ENCODE measurements at regions of chr6 and their contacts with region 1.

Region 1: GRCh38 chr6:52647199-52647598 is 23.7 kb upstream of the TMEM14A start:
- DNase-seq: no peak
- H3K4me3 ChIP-seq: no peak overlapping the region
- H3K27ac ChIP-seq: no peak overlapping the region
- H3K4me1 ChIP-seq: no peaks in the 10 kb centered on the region
- H3K27me3 ChIP-seq: peaks cover 0 to 2% of the 10 kb centered on the region in 2 experiments
- CTCF ChIP-seq: no peak
- POLR2A ChIP-seq: no peak

Region 2: GRCh38 chr6:52368002-52368401 is 279.2 kb before region 1 on chr6:
- CTCF ChIA-PET with region 1: no interaction called
- POLR2A ChIA-PET with region 1: no interaction called
- dilution Hi-C with region 1: no loop called
- intact Hi-C with region 1: no loop called
- DNase-seq: no peak
- H3K4me3 ChIP-seq: no peak overlapping the region
- H3K27ac ChIP-seq: no peak overlapping the region
- H3K4me1 ChIP-seq: peaks cover 5% of the 10 kb centered on the region
- H3K27me3 ChIP-seq: no peaks in the 10 kb centered on the region
- CTCF ChIP-seq: no peak
- POLR2A ChIP-seq: no peak

Region 3: GRCh38 chr6:52610745-52611355 is 36.3 kb before region 1 on chr6:
- CTCF ChIA-PET with region 1: interaction called, 17 read pairs
- POLR2A ChIA-PET with region 1: no interaction called
- dilution Hi-C with region 1: no loop called
- intact Hi-C with region 1: loop called (anchors 5 kb)
- DNase-seq: no peak
- H3K4me3 ChIP-seq: no peak overlapping the region
- H3K27ac ChIP-seq: no peak overlapping the region
- H3K4me1 ChIP-seq: peaks cover 40% of the 10 kb centered on the region
- H3K27me3 ChIP-seq: no peaks in the 10 kb centered on the region
- CTCF ChIP-seq: no peak
- POLR2A ChIP-seq: no peak

Region 4: GRCh38 chr6:52635049-52635577 is 12.1 kb before region 1 on chr6:
- CTCF ChIA-PET with region 1: interaction called, 62 read pairs
- POLR2A ChIA-PET with region 1: no interaction called
- dilution Hi-C with region 1: no loop called
- intact Hi-C with region 1: no loop called
- DNase-seq: peak; percentile 19
- H3K4me3 ChIP-seq: no peak overlapping the region
- H3K27ac ChIP-seq: no peak overlapping the region
- H3K4me1 ChIP-seq: peaks cover 12% of the 10 kb centered on the region
- H3K27me3 ChIP-seq: no peaks in the 10 kb centered on the region
- CTCF ChIP-seq: no peak
- POLR2A ChIP-seq: no peak

Measured in endothelial cell of umbilical vein (primary cell).